Ovary (tissue), 10 donors: ENCODE measurements at regions of chr2 and their contacts with region 1.

Region 1: DNA sequence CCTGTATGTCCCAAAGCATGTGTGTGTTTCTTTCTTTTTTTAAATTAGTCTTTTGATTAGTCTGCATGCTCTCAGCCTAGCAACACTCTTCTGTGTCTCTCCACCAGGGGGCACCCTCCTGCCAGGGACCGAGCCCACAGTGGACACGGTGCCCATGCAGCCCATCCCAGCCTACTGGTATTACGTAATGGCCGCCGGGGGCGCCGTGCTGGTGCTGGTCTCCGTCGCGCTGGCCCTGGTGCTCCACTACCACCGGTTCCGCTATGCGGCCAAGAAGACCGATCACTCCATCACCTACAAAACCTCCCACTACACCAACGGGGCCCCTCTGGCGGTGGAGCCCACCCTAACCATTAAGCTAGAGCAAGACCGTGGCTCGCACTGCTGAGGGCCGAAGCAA is 93.8 kb downstream of the NRP2 start:
- DNase-seq: peak in 1 of 5 donors; percentile 43
- H3K4me3 ChIP-seq: no peak overlapping the region
- H3K27ac ChIP-seq: no peak overlapping the region
- H3K4me1 ChIP-seq: no peaks in the 10 kb centered on the region
- H3K27me3 ChIP-seq: no peaks in the 10 kb centered on the region
- CTCF ChIP-seq: peak in 2 of 3 donors; percentile 25
- EP300 ChIP-seq: no peak
- POLR2A ChIP-seq: no peak

Region 2: GRCh38 chr2:205885492-205886099 is 109.5 kb after region 1 on chr2:
- intact Hi-C with region 1: loop called in 2 of 4 experiments (anchors 5 to 10 kb)
- DNase-seq: peak; percentile 89 to 95 (median 92)
- H3K4me3 ChIP-seq: no peak overlapping the region
- H3K27ac ChIP-seq: no peak overlapping the region
- H3K4me1 ChIP-seq: no peaks in the 10 kb centered on the region
- H3K27me3 ChIP-seq: no peaks in the 10 kb centered on the region
- CTCF ChIP-seq: peak; percentile 83 to 86 (median 85)
- EP300 ChIP-seq: no peak
- POLR2A ChIP-seq: no peak

Region 3: GRCh38 chr2:205892251-205892655 is 116.1 kb after region 1 on chr2:
- intact Hi-C with region 1: loop called in 2 of 4 experiments (anchors 5 to 10 kb)
- DNase-seq: peak in 4 of 5 donors; percentile 30 to 64 (median 38)
- H3K4me3 ChIP-seq: no peak overlapping the region
- H3K27ac ChIP-seq: no peak overlapping the region
- H3K4me1 ChIP-seq: peaks cover 3% of the 10 kb centered on the region
- H3K27me3 ChIP-seq: no peaks in the 10 kb centered on the region
- CTCF ChIP-seq: no peak
- EP300 ChIP-seq: no peak
- POLR2A ChIP-seq: no peak